PC-3 (cell line): ENCODE measurements at regions of chr11 and their contacts with region 1.

Region 1: GRCh38 chr11:103920449-103920848 is 116.0 kb upstream of the DDI1 start:
- DNase-seq: no peak
- ATAC-seq: peak; percentile 31; the same call in 1 of the 2 replicates
- H3K4me3 ChIP-seq: no peak overlapping the region
- H3K27ac ChIP-seq: no peak overlapping the region
- H3K4me1 ChIP-seq: peaks cover 24% of the 10 kb centered on the region
- H3K27me3 ChIP-seq: 0 out of 2 replicates have a peak, but pooled peaks cover 4% of the 10 kb centered on the region
- CTCF ChIP-seq: no peak

Region 2: DNA sequence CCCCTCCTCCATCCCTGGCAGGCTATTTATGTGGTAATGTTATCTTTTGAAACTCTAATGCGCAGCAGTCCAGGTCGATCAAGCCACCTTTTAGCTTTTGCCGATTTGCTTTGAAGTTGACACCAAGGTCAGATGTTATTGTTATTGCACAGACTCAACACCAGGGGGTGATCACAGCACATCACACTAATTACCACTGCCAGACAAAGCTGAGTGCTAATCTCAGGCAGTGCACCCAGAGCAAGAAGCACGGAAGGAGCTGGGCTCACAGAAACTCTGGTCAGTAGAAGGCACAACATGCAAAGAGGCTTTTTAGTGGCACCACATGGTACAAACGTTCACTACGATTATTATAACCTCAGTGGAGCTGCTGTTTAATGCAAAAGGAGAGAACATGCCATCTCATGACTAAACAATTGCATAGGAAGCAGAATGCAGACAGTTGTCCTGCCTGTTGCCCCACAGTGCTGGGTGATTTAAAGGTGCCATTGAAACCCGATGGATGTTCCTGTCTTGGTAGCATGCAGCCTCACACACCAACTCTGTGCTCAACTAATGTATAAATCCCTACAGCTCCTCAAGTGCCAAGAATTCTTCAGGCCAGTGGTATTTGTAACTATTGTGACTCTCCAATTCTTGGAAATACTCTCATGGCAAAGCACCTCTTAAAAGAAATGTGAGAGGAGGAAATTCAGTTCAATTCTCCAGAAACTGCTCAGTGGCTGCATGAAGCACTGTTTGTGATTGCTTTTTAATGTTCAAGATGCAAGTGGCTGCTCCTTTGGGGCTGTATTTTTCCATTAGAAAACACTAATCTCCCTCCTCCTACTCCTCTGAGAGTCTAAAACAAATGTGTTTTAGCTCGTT is 237.9 kb before region 1 on chr11:
- CTCF ChIA-PET with region 1: no interaction called
- POLR2A ChIA-PET with region 1: no interaction called
- intact Hi-C with region 1: loop called (anchors 5 kb)
- DNase-seq: peak; percentile 74
- ATAC-seq: peak; percentile 84
- H3K4me3 ChIP-seq: no peak overlapping the region
- H3K27ac ChIP-seq: no peak overlapping the region
- H3K4me1 ChIP-seq: no peaks in the 10 kb centered on the region
- H3K27me3 ChIP-seq: no peaks in the 10 kb centered on the region
- CTCF ChIP-seq: peak; percentile 91

Region 3: DNA sequence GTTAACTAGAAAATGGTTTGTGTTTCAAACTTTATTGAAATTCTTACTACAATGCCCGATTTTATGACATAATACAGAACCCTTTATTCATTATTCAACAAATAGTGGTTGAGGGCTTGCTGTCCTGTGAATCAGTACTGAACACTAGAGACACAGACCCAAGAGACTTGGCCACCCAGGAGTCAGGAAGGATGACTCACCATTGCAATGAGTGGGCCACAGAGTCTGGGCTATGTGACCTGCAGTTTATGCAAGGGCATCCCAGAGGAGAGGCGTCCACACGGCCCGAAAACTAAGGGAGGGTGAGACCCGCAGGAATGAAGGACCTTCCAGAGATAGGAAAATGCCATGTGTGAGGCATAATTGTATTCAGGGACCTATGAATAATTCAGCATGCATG is 27.8 kb before region 1 on chr11:
- CTCF ChIA-PET with region 1: no interaction called
- POLR2A ChIA-PET with region 1: no interaction called
- intact Hi-C with region 1: no loop called
- DNase-seq: peak; percentile 56
- ATAC-seq: peak; percentile 86
- H3K4me3 ChIP-seq: no peak overlapping the region
- H3K27ac ChIP-seq: no peak overlapping the region
- H3K4me1 ChIP-seq: no peaks in the 10 kb centered on the region
- H3K27me3 ChIP-seq: no peaks in the 10 kb centered on the region
- CTCF ChIP-seq: no peak

Region 4: GRCh38 chr11:103936059-103936458 is 15.6 kb after region 1 on chr11:
- CTCF ChIA-PET with region 1: no interaction called
- POLR2A ChIA-PET with region 1: no interaction called
- intact Hi-C with region 1: no loop called
- DNase-seq: peak; percentile 24
- ATAC-seq: no peak
- H3K4me3 ChIP-seq: no peak overlapping the region
- H3K27ac ChIP-seq: no peak overlapping the region
- H3K4me1 ChIP-seq: peaks cover 13% of the 10 kb centered on the region
- H3K27me3 ChIP-seq: no peaks in the 10 kb centered on the region
- CTCF ChIP-seq: no peak